Activated CD4-positive, alpha-beta memory T cell treated with anti-CD3 and anti-CD28 coated beads, Interleukin-2, amount 10 ng/mL, durations not matched to agents 7 days and 5 days (primary cell): ENCODE measurements at regions of chr4 and their contacts with region 1.

Region 1: GRCh38 chr4:112523764-112524505 is 8.0 kb upstream of the NEUROG2 start:
- DNase-seq: peak; percentile 77
- H3K4me3 Mint-ChIP-seq: peak overlapping the region; percentile 63
- H3K27ac Mint-ChIP-seq: no peak overlapping the region
- H3K4me1 Mint-ChIP-seq: peaks cover 33% of the 10 kb centered on the region
- H3K27me3 Mint-ChIP-seq: peaks cover 63% of the 10 kb centered on the region

Region 2: DNA sequence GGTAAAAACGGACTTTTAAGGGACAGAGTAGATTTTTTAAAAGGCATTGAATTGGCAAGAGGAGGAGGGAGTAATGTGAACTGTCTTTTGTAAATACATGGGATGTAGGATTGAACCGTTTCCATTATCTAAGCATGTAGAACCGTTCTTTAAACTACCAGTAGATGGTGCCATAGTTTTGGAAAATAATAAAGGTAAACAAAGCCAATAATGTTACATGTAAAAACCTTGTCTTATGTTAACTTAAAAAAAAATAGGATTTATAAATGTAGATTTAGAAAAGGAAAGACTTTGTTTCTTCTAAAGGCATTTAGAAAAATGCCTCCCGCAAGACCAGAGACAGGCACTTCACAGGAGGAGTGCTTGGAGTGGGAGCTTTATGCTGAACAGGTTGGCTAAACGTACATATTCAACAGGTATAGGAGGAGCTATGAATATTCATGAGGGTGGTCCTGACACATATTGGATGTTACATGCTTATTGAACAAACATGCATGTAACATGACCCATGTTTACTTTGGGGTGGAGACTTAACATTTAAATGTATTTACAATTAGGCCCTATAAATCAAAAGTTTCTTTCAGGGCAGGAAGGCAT is 424.1 kb before region 1 on chr4:
- CTCF ChIA-PET with region 1: interaction called, 12 read pairs
- POLR2A ChIA-PET with region 1: no interaction called
- DNase-seq: no peak
- H3K4me3 Mint-ChIP-seq: no peak overlapping the region
- H3K27ac Mint-ChIP-seq: no peak overlapping the region
- H3K4me1 Mint-ChIP-seq: peaks cover 2% of the 10 kb centered on the region
- H3K27me3 Mint-ChIP-seq: peaks cover 24% of the 10 kb centered on the region

Region 3: DNA sequence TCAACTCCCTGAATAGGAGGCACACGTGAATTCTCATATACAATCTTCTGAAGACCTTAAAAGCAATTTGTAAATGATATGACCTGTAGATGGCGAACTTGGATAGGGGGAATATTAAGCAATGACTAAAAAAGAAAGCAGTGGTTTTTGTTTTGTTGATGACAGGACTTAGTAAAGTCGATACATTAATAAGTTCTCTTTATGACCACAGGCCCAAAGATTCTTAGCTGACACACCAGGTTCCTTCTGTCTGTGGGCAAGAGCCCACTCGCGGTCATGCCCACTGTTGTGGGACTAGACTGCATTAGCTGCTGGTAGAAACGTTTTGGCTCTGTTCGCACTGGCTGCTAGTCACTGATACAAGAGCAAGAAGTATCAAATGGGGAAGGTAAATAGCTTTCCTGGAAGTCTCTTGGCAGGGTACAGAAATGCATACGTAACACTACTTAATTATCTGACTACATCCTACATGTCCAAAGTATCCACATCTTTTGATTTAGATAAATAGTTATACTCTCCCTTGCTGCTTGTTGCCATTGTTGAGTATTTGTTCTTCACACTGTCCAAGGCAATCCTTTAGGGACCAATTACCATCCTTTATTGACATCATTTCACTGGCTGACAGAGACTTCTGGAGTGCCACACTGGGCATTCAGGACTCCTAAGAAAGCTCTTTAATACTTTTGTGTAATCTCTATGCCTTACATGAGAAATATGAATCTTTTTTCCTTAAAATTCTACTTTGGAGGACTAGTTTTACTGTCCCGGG is 195.8 kb before region 1 on chr4:
- CTCF ChIA-PET with region 1: interaction called, 41 read pairs
- POLR2A ChIA-PET with region 1: no interaction called
- DNase-seq: no peak
- H3K4me3 Mint-ChIP-seq: no peak overlapping the region
- H3K27ac Mint-ChIP-seq: no peak overlapping the region
- H3K4me1 Mint-ChIP-seq: peaks cover 5% of the 10 kb centered on the region
- H3K27me3 Mint-ChIP-seq: no peaks in the 10 kb centered on the region

Region 4: DNA sequence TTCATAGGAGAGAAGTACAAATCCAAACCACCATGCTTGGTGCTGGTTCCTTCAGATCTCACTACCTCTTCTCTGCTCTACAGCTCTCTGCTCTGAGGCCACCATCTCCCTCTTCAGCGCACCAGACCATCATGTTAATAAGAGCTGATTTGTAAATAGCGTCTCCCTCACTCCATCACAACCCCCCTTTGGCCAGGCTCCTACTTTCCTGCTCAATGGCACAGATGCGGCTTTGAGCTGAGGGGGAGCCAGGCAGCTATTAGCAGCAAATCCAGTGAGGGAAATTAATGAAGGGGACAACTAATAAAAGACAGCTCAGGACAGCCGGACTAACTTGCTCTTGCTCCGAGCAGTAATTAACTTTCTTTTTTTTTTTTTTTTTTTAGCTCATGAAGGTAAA is 21.1 kb before region 1 on chr4:
- CTCF ChIA-PET with region 1: interaction called, 31 read pairs
- POLR2A ChIA-PET with region 1: no interaction called
- DNase-seq: no peak
- H3K4me3 Mint-ChIP-seq: no peak overlapping the region
- H3K27ac Mint-ChIP-seq: no peak overlapping the region
- H3K4me1 Mint-ChIP-seq: no peaks in the 10 kb centered on the region
- H3K27me3 Mint-ChIP-seq: peaks cover 44% of the 10 kb centered on the region

Region 5: GRCh38 chr4:112509243-112510141 is 14.4 kb before region 1 on chr4:
- CTCF ChIA-PET with region 1: interaction called, 31 read pairs
- POLR2A ChIA-PET with region 1: interaction called, 4 read pairs
- DNase-seq: no peak
- H3K4me3 Mint-ChIP-seq: peak overlapping the region; percentile 41
- H3K27ac Mint-ChIP-seq: no peak overlapping the region
- H3K4me1 Mint-ChIP-seq: peaks cover 38% of the 10 kb centered on the region
- H3K27me3 Mint-ChIP-seq: peaks cover 79% of the 10 kb centered on the region

Region 6: DNA sequence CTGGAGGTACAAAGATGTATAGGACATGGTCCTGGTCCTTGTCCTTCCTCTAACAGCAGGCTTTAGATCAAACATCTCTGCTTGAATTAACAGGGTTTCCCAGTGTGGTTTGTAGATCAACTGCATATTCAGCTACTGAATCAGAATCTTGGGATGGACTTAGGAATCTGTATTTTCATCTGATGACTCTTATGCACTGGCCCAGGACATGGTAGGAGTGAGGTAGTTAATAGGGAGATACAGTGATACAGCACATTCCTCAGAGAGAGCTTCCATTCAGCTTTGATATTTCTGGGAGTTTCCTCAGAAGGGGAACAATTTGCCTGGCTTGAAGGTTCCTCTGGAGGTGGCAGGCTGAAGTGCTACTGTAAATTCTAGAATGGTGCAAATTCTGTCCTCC is 316.1 kb after region 1 on chr4:
- CTCF ChIA-PET with region 1: no interaction called
- POLR2A ChIA-PET with region 1: no interaction called
- DNase-seq: no peak
- H3K4me3 Mint-ChIP-seq: no peak overlapping the region
- H3K27ac Mint-ChIP-seq: no peak overlapping the region
- H3K4me1 Mint-ChIP-seq: no peaks in the 10 kb centered on the region
- H3K27me3 Mint-ChIP-seq: no peaks in the 10 kb centered on the region

Region 7: DNA sequence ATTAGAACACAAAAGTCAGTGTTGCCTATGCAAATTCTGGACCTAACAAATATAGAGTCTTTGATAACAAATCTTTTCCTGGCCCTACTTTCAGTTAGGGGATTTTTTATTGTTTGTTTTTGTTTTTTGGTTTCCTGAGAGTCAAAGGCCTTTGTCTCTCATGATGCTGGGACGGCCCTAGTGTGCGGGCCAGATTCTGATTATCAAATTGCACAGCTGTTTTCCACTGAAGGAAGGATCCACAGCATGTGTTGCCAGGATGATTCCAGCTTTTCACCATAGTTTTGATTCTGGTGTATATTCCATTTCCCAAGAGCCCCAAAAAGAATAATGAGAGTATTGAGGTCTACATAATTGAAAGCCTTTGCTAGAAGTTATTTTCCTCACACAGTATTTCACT is 989.4 kb after region 1 on chr4:
- CTCF ChIA-PET with region 1: no interaction called
- POLR2A ChIA-PET with region 1: no interaction called
- DNase-seq: no peak
- H3K4me3 Mint-ChIP-seq: no peak overlapping the region
- H3K27ac Mint-ChIP-seq: no peak overlapping the region
- H3K4me1 Mint-ChIP-seq: no peaks in the 10 kb centered on the region
- H3K27me3 Mint-ChIP-seq: no peaks in the 10 kb centered on the region